A549 (cell line): ENCODE measurements at regions of chr14 and their contacts with region 1.

Region 1: GRCh38 chr14:74905375-74906142 is 17.5 kb downstream of the RPS6KL1 start:
- DNase-seq: peak; percentile 51 to 60
- ATAC-seq: peak; percentile 33 to 74; a peak in 3 of 6 replicates
- H3K4me3 ChIP-seq: no peak overlapping the region
- H3K27ac ChIP-seq: peak overlapping the region in 1 of 2 experiments; percentile 44; a peak in 1 of 6 replicates
- H3K4me1 ChIP-seq: no peaks in the 10 kb centered on the region; the same call in 2 of the 3 replicates
- CTCF ChIP-seq: peak; percentile 85
- EP300 ChIP-seq: no peak
- POLR2A ChIP-seq: no peak
- RAD21 ChIP-seq: peak; percentile 57 to 60; a peak in 4 of 5 replicates

Region 2: GRCh38 chr14:74765721-74766120 is 139.8 kb before region 1 on chr14:
- CTCF ChIA-PET with region 1: no interaction called
- POLR2A ChIA-PET with region 1: no interaction called
- DNase-seq: no peak
- ATAC-seq: no peak
- H3K4me3 ChIP-seq: peak overlapping the region; percentile 95
- H3K27ac ChIP-seq: no peak overlapping the region
- H3K4me1 ChIP-seq: peaks cover 20% of the 10 kb centered on the region
- CTCF ChIP-seq: no peak
- EP300 ChIP-seq: no peak
- POLR2A ChIP-seq: no peak
- RAD21 ChIP-seq: no peak

Region 3: GRCh38 chr14:74860906-74861733 is 44.4 kb before region 1 on chr14:
- CTCF ChIA-PET with region 1: interaction called, 226 read pairs
- POLR2A ChIA-PET with region 1: interaction called, 9 read pairs
- DNase-seq: peak; percentile 74 to 82
- ATAC-seq: peak; percentile 81 to 92
- H3K4me3 ChIP-seq: no peak overlapping the region
- H3K27ac ChIP-seq: no peak overlapping the region
- H3K4me1 ChIP-seq: no peaks in the 10 kb centered on the region
- CTCF ChIP-seq: peak; percentile 87
- EP300 ChIP-seq: no peak
- POLR2A ChIP-seq: no peak
- RAD21 ChIP-seq: peak; percentile 82 to 91

Region 4: DNA sequence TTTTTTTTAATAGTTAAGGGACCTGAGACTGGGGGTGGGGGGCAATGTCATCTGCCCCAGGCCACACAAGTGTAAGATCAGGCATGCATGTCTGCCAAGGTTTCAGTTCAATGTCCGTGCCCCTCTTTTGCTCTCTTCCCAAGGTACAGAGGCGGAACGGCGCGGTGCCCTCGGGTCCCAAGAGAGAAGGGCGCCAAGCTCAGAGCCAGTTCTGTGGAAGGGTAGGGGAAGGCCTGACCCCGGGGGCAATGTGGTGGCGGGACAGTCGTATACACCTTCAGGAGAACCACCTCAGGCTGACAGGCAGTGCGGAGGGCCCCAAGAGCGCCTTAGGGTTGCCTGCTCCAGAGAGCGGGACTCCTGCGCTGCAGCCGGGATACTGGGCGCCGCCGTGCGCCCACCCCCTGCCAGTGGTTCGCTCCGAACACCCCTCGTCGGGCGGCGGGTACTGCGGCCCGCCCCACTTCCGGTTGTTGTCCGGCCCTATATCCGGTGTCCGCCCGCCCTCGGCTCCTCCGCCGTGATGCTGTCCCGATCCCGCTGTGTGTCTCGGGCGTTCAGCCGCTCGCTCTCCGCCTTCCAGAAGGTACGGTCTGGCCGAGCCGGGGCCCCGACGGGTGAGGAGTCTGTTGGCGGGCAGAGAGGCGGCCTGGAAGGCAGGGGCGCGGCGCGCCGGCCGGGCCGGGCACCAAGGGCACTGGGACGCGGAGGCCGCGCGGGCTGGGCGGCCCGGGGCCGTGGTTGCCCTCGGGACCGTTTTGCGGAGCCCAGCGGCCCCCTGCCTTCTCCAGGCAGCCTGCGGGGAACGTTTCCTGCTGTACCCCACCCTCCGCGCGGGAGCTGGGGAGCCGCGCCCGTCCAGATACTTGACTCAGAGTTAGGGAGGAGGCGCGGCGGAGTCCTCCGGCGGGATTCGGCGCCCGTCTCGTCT is 23.9 kb before region 1 on chr14 and contains the start of gene DLST:
- CTCF ChIA-PET with region 1: interaction called, 77 read pairs
- POLR2A ChIA-PET with region 1: no interaction called
- DNase-seq: peak; percentile 90 to 92
- ATAC-seq: peak; percentile 98
- H3K4me3 ChIP-seq: peak within 1 kb of the TSS; percentile 100
- H3K27ac ChIP-seq: peak within 1 kb of the TSS; percentile 94 to 99
- H3K4me1 ChIP-seq: peaks cover 50% of the 10 kb centered on the region
- CTCF ChIP-seq: no peak
- EP300 ChIP-seq: no peak
- POLR2A ChIP-seq: no peak; the same call in none of the 2 replicates
- RAD21 ChIP-seq: no peak
- polyA plus RNA-seq, gene DLST: 129 and 137 TPM in 2 replicates

Region 5: DNA sequence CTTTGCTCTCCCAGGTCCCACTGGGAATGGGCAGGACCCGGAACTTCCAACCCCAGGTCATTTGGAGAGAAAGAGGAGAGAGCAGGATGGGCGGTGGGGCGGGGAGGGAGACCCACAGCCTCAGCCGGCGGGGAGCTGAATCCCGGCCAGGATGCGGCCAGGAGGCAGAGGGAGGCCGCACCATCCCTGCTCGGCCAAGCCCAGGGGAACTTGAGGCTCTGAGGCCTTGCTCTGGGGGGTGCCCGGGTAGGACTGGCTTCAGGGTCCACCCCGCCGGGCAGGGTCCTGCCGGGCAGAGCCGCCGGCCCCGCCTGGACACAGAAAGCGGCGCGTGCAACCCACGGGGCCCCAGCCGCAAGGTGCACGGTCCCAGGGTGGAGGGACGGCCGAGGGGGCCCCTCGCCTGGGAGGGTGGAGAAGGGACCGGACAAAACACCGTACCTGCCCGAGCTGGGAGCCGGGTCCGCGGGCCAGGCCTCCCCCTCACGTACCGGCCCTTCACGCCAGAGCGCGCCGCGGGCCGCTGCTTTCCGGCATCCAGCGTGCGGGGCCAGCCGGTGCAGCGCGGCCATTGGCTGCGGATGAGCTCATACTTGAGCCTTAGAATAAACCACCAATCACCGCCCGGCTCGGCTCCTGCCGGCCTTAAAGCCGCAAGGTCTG is 17.3 kb after region 1 on chr14 and contains the start of gene RPS6KL1:
- CTCF ChIA-PET with region 1: interaction called, 10 read pairs
- POLR2A ChIA-PET with region 1: interaction called, 4 read pairs
- DNase-seq: peak; percentile 57 to 80
- ATAC-seq: peak; percentile 76 to 95
- H3K4me3 ChIP-seq: peak within 1 kb of the TSS; percentile 35
- H3K27ac ChIP-seq: peak within 1 kb of the TSS in 1 of 2 experiments; percentile 48; a peak in 2 of 6 replicates
- H3K4me1 ChIP-seq: no peaks in the 10 kb centered on the region
- CTCF ChIP-seq: no peak
- EP300 ChIP-seq: no peak
- POLR2A ChIP-seq: no peak
- RAD21 ChIP-seq: no peak
- polyA plus RNA-seq, gene RPS6KL1: 0.32 and 0.40 TPM in 2 replicates

Region 6: DNA sequence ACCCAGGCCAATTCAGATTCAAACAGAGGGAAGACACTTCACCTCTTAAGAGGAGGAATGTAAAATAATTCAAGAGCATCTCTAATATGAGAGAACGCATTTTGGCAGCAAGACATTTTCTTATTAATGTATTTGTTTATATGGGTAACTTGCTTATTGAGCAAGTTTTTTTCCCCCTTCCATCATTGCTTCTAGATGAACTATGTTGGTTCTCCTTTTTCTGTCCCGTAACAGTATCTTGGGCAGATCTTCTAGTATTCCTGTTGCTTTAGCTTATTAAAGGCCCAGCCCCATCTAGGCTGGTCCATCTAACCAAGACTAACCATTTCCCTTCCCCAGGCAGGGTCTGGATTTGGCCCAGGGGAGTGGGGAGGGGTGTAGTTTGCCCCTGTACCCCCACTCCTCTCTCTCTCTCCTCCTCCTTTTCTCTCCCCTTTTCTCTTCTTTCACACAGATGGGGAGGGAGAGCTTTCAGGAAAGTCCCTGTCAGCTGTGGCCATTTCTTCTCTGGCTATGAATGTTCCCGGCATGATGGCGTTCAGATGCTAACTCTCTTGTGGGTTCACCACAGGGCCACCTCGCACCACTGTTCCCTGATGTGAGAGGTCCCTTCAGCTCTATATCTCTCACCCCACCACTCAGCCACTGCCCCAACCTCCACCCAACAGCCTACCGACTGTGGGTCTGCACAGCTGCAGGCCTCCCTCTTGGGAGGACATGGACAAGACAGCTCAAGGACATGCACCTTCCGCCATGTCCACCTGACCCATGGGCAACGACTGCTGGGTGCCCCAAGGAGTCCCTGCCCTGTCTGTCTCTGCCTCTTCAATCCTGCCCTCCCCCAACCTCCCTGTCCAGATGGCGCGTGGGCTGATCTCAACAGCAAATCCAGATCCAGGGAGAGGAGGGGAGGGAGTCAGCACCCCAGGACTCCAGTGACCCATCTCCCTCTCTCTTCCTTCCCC is 33.3 kb after region 1 on chr14:
- CTCF ChIA-PET with region 1: interaction called, 13 read pairs
- POLR2A ChIA-PET with region 1: no interaction called
- DNase-seq: no peak
- ATAC-seq: no peak
- H3K4me3 ChIP-seq: no peak overlapping the region
- H3K27ac ChIP-seq: no peak overlapping the region
- H3K4me1 ChIP-seq: peaks cover 9% of the 10 kb centered on the region
- CTCF ChIP-seq: no peak
- EP300 ChIP-seq: no peak
- POLR2A ChIP-seq: no peak
- RAD21 ChIP-seq: no peak

Region 7: GRCh38 chr14:75013290-75013689 is 107.7 kb after region 1 on chr14:
- CTCF ChIA-PET with region 1: no interaction called
- POLR2A ChIA-PET with region 1: no interaction called
- DNase-seq: no peak
- ATAC-seq: no peak
- H3K4me3 ChIP-seq: no peak overlapping the region
- H3K27ac ChIP-seq: no peak overlapping the region
- H3K4me1 ChIP-seq: peaks cover 12% of the 10 kb centered on the region; the same call in 2 of the 3 replicates
- CTCF ChIP-seq: no peak
- EP300 ChIP-seq: no peak
- POLR2A ChIP-seq: no peak
- RAD21 ChIP-seq: no peak